Caki2 (cell line): ENCODE measurements at regions of chr3 and their contacts with region 1.

Region 1: GRCh38 chr3:155701882-155702465 is 42.9 kb downstream of the PLCH1 start:
- DNase-seq: peak; percentile 45

Region 2: DNA sequence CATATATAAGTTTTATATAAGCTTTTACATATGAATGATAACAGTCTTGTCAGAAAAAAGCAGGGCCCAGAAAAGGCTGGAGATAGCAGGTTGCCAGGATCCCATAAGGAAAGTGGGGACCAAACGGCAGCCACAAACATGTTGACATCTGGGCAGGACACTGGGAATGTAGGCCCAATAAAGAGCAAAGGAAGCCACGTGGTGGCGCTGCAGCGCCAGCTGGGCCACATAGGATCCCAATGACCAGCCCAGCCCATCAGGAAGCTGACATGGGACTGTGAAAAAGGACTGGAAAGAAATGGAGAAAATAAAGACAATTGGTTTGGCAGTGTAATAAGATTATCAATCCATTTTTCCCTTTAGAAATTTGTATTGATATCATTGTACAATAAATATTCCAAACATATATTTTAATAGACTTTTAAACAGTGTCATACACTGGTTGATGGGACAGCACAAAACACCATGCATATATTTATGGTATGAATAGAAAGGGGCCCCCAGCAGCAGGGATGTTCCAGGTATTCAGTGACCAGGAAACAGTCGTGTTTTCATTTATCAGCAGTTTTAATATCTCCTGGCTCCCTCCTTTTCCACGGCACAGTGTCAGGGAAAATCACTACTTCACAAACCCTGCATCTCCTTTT is 319.5 kb before region 1 on chr3:
- in situ Hi-C with region 1: loop called (anchors 25 kb)
- DNase-seq: peak; percentile 60

Region 3: DNA sequence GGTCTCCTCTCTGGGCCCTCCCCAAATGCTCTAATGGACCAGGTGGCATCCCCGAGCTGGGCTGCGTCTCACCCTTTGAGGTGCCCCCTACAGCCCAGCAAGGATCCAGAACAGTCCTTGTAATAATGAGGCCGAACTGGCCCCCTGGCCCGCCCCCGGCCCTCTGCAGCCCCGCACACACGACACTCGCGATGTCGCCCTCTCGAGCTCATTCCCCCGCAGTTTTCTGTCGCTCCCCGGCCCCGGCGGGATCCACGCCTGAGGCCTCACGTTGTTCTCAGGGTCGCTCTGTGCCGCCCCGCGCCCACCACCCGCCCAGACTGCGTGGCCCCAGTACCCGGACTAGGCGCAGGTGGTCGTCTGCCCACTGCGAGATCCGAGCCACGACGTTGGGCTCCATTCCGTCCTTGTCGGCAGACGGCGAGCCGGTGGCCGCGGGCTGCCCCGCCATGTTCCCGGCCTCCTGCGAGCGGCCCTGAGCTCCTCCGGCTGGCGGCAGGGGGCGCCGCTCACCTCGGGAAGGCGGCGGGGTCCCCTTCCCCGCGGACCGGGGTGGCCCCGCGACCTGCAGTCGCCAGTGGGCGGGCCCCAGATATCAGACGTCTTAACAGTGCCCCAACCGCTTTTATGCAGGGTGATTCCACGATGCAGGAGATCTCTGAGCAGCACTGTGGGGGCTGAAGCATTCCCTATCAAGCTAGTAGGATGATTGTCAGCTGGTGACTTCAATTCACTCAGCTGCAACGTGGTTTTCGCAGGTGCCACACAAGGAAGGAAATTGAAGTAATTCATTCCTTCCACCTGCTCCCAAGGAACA is 104.0 kb after region 1 on chr3 and contains the start of gene C3orf33:
- in situ Hi-C with region 1: no loop called
- DNase-seq: peak; percentile 86
- total RNA-seq, gene C3orf33: 2.7 and 6.7 TPM in 2 replicates